Vagina (tissue), 2 donors: ENCODE measurements at regions of chr22 and their contacts with region 1.

Region 1: DNA sequence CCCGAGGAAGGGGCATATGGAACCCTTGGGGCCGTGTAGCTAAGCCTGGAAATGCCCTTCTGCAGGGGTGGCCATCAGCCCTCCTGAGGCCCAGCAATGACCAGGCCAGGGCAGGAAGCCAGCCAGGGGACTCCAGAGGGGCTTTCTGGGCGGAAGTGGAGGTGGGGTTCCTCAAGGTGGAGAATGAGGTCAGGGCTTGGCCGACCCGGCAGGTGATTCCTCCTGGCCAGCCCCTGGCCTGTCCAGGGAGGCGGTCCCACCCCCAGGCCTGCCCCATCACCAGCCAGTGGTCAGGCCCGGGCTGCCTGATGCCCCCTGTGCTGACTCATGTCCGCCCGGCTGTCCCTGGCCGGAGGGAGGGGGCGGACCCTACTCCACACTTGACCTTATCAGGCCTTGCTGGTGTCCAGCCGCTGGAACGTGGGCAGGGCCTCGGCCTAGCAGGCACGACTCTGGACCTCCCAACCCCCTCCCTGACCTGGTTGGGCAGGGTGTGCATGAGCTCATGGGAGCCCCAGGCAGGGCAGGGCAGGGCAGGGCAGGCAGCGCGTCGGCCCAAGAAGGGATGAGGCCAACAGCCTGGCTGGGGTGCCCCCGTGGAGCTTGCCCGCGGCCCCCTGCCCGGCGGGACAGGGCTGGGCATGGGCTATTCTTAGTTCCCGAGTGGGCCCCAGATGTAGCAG is 36.0 kb downstream of the RPL3 start:
- DNase-seq: no peak
- H3K4me3 ChIP-seq: no peak overlapping the region
- H3K27ac ChIP-seq: peak overlapping the region; percentile 42
- H3K4me1 ChIP-seq: peaks cover 19% of the 10 kb centered on the region
- H3K27me3 ChIP-seq: no peaks in the 10 kb centered on the region
- CTCF ChIP-seq: no peak
- POLR2A ChIP-seq: no peak

Region 2: GRCh38 chr22:38943201-38943600 is 340.3 kb before region 1 on chr22:
- intact Hi-C with region 1: no loop called
- DNase-seq: no peak
- H3K4me3 ChIP-seq: no peak overlapping the region
- H3K27ac ChIP-seq: no peak overlapping the region
- H3K4me1 ChIP-seq: no peaks in the 10 kb centered on the region
- H3K27me3 ChIP-seq: no peaks in the 10 kb centered on the region
- CTCF ChIP-seq: no peak
- POLR2A ChIP-seq: no peak

Region 3: DNA sequence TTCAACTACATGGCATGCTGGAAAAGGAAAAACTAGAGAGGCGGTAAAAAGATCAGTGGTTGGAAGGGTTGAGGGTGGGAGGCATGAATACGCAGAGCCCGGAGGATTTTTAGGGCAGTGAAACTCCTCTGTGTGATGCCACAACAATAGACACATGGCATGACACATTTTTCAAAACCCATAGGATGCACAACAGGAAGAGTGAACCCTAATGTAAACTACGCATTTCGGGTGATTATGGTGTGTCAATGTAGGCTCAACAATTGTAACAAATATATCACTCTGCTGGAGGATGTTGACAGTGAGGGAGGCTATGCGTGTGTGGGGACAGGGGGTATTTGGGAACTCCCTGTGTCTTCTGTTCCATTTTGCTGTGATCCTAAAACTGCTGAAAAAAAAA is 695.6 kb after region 1 on chr22:
- intact Hi-C with region 1: loop called (anchors 10 kb)
- DNase-seq: no peak
- H3K4me3 ChIP-seq: no peak overlapping the region
- H3K27ac ChIP-seq: no peak overlapping the region
- H3K4me1 ChIP-seq: no peaks in the 10 kb centered on the region
- H3K27me3 ChIP-seq: no peaks in the 10 kb centered on the region
- CTCF ChIP-seq: no peak
- POLR2A ChIP-seq: no peak

Region 4: GRCh38 chr22:40050258-40050657 is 766.8 kb after region 1 on chr22:
- intact Hi-C with region 1: loop called (anchors 2 kb)
- DNase-seq: no peak
- H3K4me3 ChIP-seq: no peak overlapping the region
- H3K27ac ChIP-seq: no peak overlapping the region
- H3K4me1 ChIP-seq: peaks cover 60% of the 10 kb centered on the region
- H3K27me3 ChIP-seq: no peaks in the 10 kb centered on the region
- CTCF ChIP-seq: no peak
- POLR2A ChIP-seq: no peak